CD4-positive, alpha-beta memory T cell (primary cell): ENCODE measurements at regions of chr17 and their contacts with region 1.

Region 1: DNA sequence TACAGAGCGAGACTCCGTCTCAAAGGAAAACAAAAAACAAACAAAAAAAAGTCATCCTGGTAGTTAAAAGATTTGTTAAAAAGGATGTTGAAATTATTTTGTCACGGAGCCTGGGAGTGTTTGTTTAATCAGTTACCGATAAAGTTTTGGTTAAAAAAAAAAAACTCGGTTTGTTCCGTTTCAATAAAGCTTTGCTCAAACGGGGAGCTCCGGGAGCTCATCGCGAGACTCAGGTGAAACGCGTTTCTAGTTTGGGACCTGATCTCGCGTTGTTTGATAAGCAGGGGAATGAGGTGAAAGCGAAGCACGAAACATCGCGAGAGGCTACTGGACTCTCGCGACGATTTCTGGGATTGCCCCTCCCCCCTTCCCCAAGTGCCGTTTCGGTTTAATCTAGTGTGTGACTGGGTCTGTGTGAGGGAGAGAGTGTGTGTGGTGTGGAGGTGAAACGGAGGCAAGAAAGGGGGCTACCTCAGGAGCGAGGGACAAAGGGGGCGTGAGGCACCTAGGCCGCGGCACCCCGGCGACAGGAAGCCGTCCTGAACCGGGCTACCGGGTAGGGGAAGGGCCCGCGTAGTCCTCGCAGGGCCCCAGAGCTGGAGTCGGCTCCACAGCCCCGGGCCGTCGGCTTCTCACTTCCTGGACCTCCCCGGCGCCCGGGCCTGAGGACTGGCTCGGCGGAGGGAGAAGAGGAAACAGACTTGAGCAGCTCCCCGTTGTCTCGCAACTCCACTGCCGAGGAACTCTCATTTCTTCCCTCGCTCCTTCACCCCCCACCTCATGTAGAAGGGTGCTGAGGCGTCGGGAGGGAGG is at the start of gene CDK12:
- DNase-seq: peak; percentile 95 to 98 (median 96)
- H3K4me3 ChIP-seq: peak within 1 kb of the TSS; percentile 67 to 96
- H3K4me3 Mint-ChIP-seq: peak within 1 kb of the TSS; percentile 92 to 98 (median 96)
- H3K27ac ChIP-seq: peak within 1 kb of the TSS; percentile 93
- H3K27ac Mint-ChIP-seq: peak within 1 kb of the TSS; percentile 91 to 99 (median 97)
- H3K4me1 ChIP-seq: peaks cover 40% of the 10 kb centered on the region
- H3K4me1 Mint-ChIP-seq: peaks cover 14 to 57% (median 34%) of the 10 kb centered on the region in 4 donors
- H3K27me3 ChIP-seq: no peaks in the 10 kb centered on the region
- H3K27me3 Mint-ChIP-seq: no peaks in the 10 kb centered on the region
- total RNA-seq, gene CDK12: 107 to 114 TPM

Region 2: DNA sequence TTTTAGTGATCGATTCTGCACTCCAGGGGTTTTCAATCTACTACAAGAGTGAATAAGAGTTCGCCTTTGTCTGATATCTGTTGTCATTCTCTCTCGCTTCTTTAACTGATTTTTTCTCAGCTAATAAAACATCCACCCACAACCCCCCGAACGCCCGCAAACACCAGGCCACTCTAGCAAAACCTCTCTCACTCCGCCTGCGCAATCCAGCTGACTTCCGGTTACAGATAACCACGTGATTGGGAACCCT is 261.6 kb before region 1 on chr17:
- CTCF ChIA-PET with region 1: no interaction called
- POLR2A ChIA-PET with region 1: interaction called, 11 read pairs
- intact Hi-C with region 1: loop called (anchors 10 kb)
- DNase-seq: peak in 4 of 5 donors; percentile 92 to 94 (median 92)
- H3K4me3 ChIP-seq: peak overlapping the region; percentile 77 to 93
- H3K4me3 Mint-ChIP-seq: peak overlapping the region; percentile 86 to 98 (median 96)
- H3K27ac ChIP-seq: peak overlapping the region; percentile 98
- H3K27ac Mint-ChIP-seq: peak overlapping the region; percentile 96 to 100 (median 100)
- H3K4me1 ChIP-seq: peaks cover 58% of the 10 kb centered on the region
- H3K4me1 Mint-ChIP-seq: peaks cover 37 to 73% (median 58%) of the 10 kb centered on the region in 4 donors
- H3K27me3 ChIP-seq: no peaks in the 10 kb centered on the region
- H3K27me3 Mint-ChIP-seq: no peaks in the 10 kb centered on the region

Region 3: DNA sequence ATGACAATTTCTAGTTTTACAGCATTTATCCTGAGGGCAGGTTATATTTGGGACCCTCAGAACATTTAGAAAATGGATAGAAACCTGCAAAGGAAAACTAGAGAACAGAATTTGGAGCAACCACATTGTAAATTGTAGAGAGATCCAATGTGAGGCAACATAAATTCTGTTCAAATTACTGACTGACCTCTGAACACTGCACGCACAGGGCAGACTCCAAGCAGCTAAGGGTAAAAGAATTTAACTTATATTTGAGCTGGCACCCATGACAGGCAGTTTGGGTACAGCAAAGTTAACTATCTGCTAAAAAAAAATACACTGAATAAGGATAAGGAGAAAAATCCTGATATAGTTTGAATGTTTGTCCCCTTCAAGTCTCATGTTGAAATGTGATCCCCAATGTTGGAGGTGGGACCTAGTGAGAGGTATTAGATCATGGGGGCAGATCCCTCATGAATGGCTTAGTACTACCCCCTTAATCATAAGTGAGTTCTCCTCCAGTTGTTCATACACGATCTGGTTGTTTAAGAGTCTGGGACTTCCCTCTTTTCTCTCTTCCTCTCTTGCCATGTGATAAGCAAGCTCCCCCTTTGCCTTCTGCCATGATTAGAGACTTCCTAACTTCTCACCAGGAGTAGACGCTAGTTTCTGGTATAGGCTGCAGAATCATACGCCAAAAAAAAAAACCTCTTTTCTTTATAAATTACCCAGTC is 135.6 kb before region 1 on chr17:
- CTCF ChIA-PET with region 1: no interaction called
- POLR2A ChIA-PET with region 1: no interaction called
- intact Hi-C with region 1: no loop called
- DNase-seq: no peak
- H3K4me3 ChIP-seq: no peak overlapping the region
- H3K4me3 Mint-ChIP-seq: no peak overlapping the region
- H3K27ac ChIP-seq: no peak overlapping the region
- H3K27ac Mint-ChIP-seq: peak overlapping the region in 2 of 7 donors; percentile 36 to 73
- H3K4me1 ChIP-seq: no peaks in the 10 kb centered on the region
- H3K4me1 Mint-ChIP-seq: peaks cover 1 to 5% (median 3%) of the 10 kb centered on the region in 4 donors
- H3K27me3 ChIP-seq: no peaks in the 10 kb centered on the region
- H3K27me3 Mint-ChIP-seq: no peaks in the 10 kb centered on the region

Region 4: GRCh38 chr17:39401412-39402243 is 59.7 kb before region 1 on chr17 and contains the start of gene FBXL20:
- CTCF ChIA-PET with region 1: no interaction called
- POLR2A ChIA-PET with region 1: interaction called, 52 read pairs
- intact Hi-C with region 1: loop called (anchors 1 kb)
- DNase-seq: peak; percentile 90 to 95 (median 92)
- H3K4me3 ChIP-seq: peak within 1 kb of the TSS; percentile 87 to 89
- H3K4me3 Mint-ChIP-seq: peak within 1 kb of the TSS; percentile 93 to 99 (median 97)
- H3K27ac ChIP-seq: peak within 1 kb of the TSS; percentile 85
- H3K27ac Mint-ChIP-seq: peak within 1 kb of the TSS; percentile 97 to 99 (median 98)
- H3K4me1 ChIP-seq: peaks cover 17% of the 10 kb centered on the region
- H3K4me1 Mint-ChIP-seq: peaks cover 28 to 54% (median 41%) of the 10 kb centered on the region in 4 donors
- H3K27me3 ChIP-seq: no peaks in the 10 kb centered on the region
- H3K27me3 Mint-ChIP-seq: peaks cover 0 to 2% of the 10 kb centered on the region in 2 donors
- total RNA-seq, gene FBXL20: 35.3 to 38.5 TPM

Region 5: DNA sequence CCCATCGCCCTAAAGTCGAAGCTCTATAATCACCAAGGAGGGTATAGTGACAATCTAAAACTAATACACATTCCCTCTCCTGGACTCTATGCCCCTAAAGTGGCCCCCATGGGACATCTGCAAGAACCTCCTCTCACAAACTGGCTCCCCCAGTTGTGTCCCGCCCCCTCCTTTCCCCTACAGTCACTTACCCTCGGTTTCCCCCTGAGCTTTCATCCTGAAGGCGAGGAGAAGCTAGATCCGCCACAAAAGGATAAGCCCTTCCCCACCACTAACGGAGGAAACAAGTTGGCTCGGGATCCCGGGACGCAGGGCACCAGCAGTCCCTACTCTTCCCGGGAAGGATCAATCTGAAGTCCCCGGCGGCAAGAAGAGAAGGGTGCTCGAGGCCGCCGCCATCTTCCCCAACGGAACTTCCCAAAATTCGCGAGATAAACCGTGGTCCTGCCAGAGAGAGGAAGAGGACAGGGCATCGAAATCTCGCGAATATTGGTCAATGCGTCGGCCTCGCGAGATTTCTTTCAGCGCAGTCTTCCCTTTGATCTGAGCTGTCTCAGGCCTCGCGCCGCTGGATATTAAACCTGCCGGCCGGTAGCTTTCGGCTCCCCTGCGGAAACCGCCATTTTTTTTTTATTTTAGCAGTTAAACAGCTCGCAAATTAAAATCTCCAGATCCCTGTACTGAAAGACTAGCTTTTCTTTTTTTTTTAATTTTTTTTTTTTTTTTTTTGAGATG is 10.3 kb before region 1 on chr17 and contains the start of gene MED1:
- CTCF ChIA-PET with region 1: interaction called, 14 read pairs
- POLR2A ChIA-PET with region 1: interaction called, 167 read pairs
- intact Hi-C with region 1: loop called (anchors 1 kb)
- DNase-seq: peak; percentile 92 to 96 (median 94)
- H3K4me3 ChIP-seq: peak within 1 kb of the TSS; percentile 94
- H3K4me3 Mint-ChIP-seq: peak within 1 kb of the TSS; percentile 93 to 97 (median 96)
- H3K27ac ChIP-seq: peak within 1 kb of the TSS; percentile 83
- H3K27ac Mint-ChIP-seq: peak within 1 kb of the TSS; percentile 97 to 99 (median 99)
- H3K4me1 ChIP-seq: peaks cover 29% of the 10 kb centered on the region
- H3K4me1 Mint-ChIP-seq: peaks cover 12 to 32% (median 22%) of the 10 kb centered on the region in 4 donors
- H3K27me3 ChIP-seq: no peaks in the 10 kb centered on the region
- H3K27me3 Mint-ChIP-seq: no peaks in the 10 kb centered on the region
- total RNA-seq, gene MED1: 59.1 to 62.3 TPM

Region 6: DNA sequence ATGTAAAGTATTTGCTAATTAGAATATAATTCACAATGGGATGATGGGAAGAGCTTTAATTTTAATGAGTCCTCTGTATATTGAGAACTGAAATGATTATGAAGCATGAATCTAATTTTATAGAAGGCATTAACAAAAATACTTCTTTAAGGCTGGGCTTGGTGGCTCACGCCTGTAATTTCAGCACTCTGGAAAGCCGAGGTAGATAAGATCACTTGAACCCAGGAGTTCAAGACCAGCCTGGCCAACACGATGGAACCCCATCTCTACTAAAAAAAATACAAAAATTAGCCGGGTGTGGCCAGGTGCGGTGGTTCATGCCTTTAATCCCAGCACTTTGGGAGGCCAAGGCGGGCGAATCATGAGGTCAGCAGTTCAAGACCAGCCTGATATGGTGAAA is 12.0 kb after region 1 on chr17:
- CTCF ChIA-PET with region 1: interaction called, 4 read pairs
- POLR2A ChIA-PET with region 1: interaction called, 13 read pairs
- intact Hi-C with region 1: no loop called
- DNase-seq: no peak
- H3K4me3 ChIP-seq: no peak overlapping the region
- H3K4me3 Mint-ChIP-seq: no peak overlapping the region
- H3K27ac ChIP-seq: no peak overlapping the region
- H3K27ac Mint-ChIP-seq: no peak overlapping the region
- H3K4me1 ChIP-seq: no peaks in the 10 kb centered on the region
- H3K4me1 Mint-ChIP-seq: peaks cover 0 to 8% (median 7%) of the 10 kb centered on the region in 4 donors
- H3K27me3 ChIP-seq: no peaks in the 10 kb centered on the region
- H3K27me3 Mint-ChIP-seq: no peaks in the 10 kb centered on the region